Dorsolateral prefrontal cortex (tissue), 120 donors: ENCODE measurements at regions of chr3 and their contacts with region 1.

Region 1: DNA sequence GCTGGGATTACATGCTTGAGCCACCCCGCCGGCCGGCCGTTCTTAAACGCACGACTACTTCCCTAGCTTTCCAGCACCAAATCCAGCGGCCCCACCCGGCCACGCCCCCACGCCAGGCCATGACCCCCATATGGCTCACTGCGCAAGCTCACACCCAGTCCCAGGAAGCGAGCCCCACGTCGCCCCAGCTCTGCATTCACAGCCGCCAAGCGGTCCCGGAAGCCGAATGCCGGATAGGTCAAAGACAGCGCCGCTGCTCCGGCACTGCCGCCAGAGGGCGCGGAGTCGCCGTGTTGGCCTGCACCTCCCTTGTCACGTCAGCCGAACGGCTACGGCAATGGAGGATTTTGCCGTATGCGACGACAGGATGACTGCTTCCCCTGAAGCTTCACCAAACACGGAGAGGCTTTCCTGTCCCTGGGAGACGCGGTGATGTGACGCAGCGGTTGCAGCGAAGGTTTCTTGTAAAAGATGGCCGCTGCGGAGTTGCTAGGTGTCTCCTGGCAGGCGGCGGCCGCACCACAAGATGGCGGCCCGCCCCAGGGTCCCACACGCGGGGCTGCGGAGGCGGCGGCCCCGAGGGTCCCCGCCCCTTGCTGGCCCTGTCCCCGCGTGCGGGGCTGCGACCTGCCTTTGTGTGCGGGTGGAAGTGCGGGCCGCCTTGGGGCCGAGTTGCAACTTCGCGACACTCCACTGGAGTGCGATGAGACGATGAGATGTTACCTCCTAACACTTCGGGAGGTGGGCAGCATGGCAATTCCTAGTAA is 30.2 kb upstream of the RPN1 start:
- DNase-seq: peak; percentile 97 to 100 (median 98)
- H3K4me3 ChIP-seq: peak overlapping the region; percentile 53 to 95 (median 76)
- H3K27ac ChIP-seq: peak overlapping the region; percentile 86 to 100 (median 98)
- H3K27me3 ChIP-seq: no peaks in the 10 kb centered on the region
- CTCF ChIP-seq: peak; percentile 82 to 99 (median 97)

Region 2: GRCh38 chr3:128650096-128651050 is 30.4 kb before region 1 on chr3 and contains the start of gene RPN1:
- intact Hi-C with region 1: loop called in 1 of 2 experiments (anchors 2 kb)
- DNase-seq: peak; percentile 91 to 96 (median 96)
- H3K4me3 ChIP-seq: peak within 1 kb of the TSS; percentile 66 to 100 (median 100)
- H3K27ac ChIP-seq: peak within 1 kb of the TSS; percentile 47 to 99 (median 94)
- H3K27me3 ChIP-seq: no peaks in the 10 kb centered on the region
- CTCF ChIP-seq: peak in 24 of 56 donors; percentile 5 to 46 (median 26)
- total RNA-seq, gene RPN1: 67.6 to 110 (median 88.8) TPM

Region 3: GRCh38 chr3:128725932-128726690 is 45.3 kb after region 1 on chr3 and contains the start of gene RAB7A:
- intact Hi-C with region 1: loop called (anchors 2 to 5 kb)
- DNase-seq: peak; percentile 94 to 99 (median 98)
- H3K4me3 ChIP-seq: peak within 1 kb of the TSS; percentile 71 to 100 (median 97)
- H3K27ac ChIP-seq: peak within 1 kb of the TSS; percentile 59 to 97 (median 91)
- H3K27me3 ChIP-seq: no peaks in the 10 kb centered on the region
- CTCF ChIP-seq: peak in 50 of 56 donors; percentile 7 to 69 (median 44)
- total RNA-seq, gene RAB7A: 221 to 378 (median 299) TPM

Region 4: DNA sequence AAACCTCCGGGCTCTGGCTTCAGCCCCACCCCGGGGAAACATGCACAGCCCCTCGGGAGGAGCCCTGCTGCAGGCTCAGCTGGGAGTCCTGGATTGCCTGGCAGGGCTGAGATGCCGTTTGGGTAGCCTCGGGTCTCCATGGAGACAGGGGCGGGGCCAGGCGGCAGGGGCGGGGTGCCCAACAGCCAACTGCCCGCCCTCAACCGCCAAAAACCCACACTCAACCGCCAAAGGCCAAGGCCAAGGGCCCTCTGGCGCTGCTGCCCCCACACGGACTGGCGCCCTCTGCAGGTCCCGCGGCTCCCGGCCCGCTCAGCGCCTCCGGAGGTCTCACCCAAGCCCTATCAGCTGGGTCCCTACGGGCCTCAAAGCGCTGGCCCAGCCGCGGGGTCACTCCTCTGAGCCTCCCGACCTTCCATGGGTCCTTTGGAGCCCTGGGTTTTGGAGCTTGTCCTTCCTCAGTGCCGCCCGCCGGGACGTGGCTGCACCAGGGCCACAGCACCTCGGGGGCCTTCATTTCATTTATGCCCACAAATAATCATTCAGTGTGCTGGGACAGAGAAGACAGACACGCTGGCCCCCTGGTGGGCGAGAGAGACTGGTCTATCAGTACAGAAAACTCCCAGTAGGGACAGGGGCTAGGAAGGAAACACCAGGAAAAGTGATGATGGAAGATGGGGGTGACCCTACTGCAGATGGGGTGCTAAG is 165.1 kb after region 1 on chr3:
- intact Hi-C with region 1: loop called in 1 of 2 experiments (anchors 2 kb)
- DNase-seq: peak; percentile 66 to 87 (median 82)
- H3K4me3 ChIP-seq: peak overlapping the region; percentile 30 to 72 (median 55)
- H3K27ac ChIP-seq: peak overlapping the region in 57 of 59 donors; percentile 4 to 92 (median 81)
- H3K27me3 ChIP-seq: no peaks in the 10 kb centered on the region
- CTCF ChIP-seq: peak in 54 of 56 donors; percentile 25 to 78 (median 60)